ENCODE measurements at regions of chr10 and their contacts with region 1.

Region 1: GRCh38 chr10:124719213-124719851 is 24.8 kb downstream of the FAM53B start:
- DNase-seq: peak; percentile 54 to 85 (median 77)
- H3K4me3 ChIP-seq: peak overlapping the region; percentile 42
- H3K4me3 Mint-ChIP-seq: peak overlapping the region; percentile 35 to 85 (median 82)
- H3K27ac ChIP-seq: peak overlapping the region; percentile 77
- H3K27ac Mint-ChIP-seq: peak overlapping the region; percentile 88 to 99 (median 98)
- H3K4me1 ChIP-seq: peaks cover 99% of the 10 kb centered on the region
- H3K4me1 Mint-ChIP-seq: peaks cover 92 to 99% (median 97%) of the 10 kb centered on the region in 3 donors
- H3K27me3 ChIP-seq: no peaks in the 10 kb centered on the region
- H3K27me3 Mint-ChIP-seq: peaks cover 0 to 2% of the 10 kb centered on the region in 2 donors

Region 2: GRCh38 chr10:124539935-124540641 is 179.2 kb before region 1 on chr10:
- CTCF ChIA-PET with region 1: interaction called, 11 read pairs
- POLR2A ChIA-PET with region 1: no interaction called
- DNase-seq: peak; percentile 59 to 81 (median 63)
- H3K4me3 ChIP-seq: no peak overlapping the region
- H3K4me3 Mint-ChIP-seq: no peak overlapping the region
- H3K27ac ChIP-seq: no peak overlapping the region
- H3K27ac Mint-ChIP-seq: peak overlapping the region in 2 of 8 donors; percentile 3 to 57
- H3K4me1 ChIP-seq: peaks cover 11% of the 10 kb centered on the region
- H3K4me1 Mint-ChIP-seq: peaks cover under 1 to 13% (median 6%) of the 10 kb centered on the region in 3 donors
- H3K27me3 ChIP-seq: no peaks in the 10 kb centered on the region
- H3K27me3 Mint-ChIP-seq: no peaks in the 10 kb centered on the region

Region 3: DNA sequence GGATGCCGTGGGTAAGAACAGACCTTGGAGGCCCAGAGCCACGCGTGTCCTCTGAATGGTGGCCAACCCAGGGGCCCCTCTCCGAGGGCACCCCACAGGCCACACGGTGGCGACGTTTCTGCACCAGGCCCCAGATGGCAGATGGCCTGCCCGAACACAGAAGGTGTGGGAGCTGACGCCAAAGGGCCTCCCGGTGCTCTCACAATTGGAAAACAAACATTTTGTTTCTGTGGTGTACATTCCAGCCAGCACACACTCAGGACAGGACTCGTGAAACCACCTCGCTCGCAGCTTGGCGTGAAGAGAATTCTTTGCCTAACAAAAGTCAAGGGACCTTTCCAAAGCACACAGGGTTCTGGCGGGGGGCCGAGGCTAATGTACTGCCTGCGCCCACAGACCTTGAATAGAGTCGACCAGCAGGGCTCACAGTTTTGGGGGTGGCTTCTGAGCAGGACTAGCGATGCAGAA is 87.2 kb before region 1 on chr10:
- CTCF ChIA-PET with region 1: interaction called, 29 read pairs
- POLR2A ChIA-PET with region 1: interaction called, 7 read pairs
- DNase-seq: peak in 4 of 5 donors; percentile 26 to 64 (median 32)
- H3K4me3 ChIP-seq: no peak overlapping the region
- H3K4me3 Mint-ChIP-seq: peak overlapping the region in 1 of 7 donors; percentile 13
- H3K27ac ChIP-seq: no peak overlapping the region
- H3K27ac Mint-ChIP-seq: peak overlapping the region in 7 of 8 donors; percentile 50 to 94 (median 82)
- H3K4me1 ChIP-seq: peaks cover 64% of the 10 kb centered on the region
- H3K4me1 Mint-ChIP-seq: peaks cover 65 to 94% (median 81%) of the 10 kb centered on the region in 3 donors
- H3K27me3 ChIP-seq: no peaks in the 10 kb centered on the region
- H3K27me3 Mint-ChIP-seq: no peaks in the 10 kb centered on the region

Region 4: DNA sequence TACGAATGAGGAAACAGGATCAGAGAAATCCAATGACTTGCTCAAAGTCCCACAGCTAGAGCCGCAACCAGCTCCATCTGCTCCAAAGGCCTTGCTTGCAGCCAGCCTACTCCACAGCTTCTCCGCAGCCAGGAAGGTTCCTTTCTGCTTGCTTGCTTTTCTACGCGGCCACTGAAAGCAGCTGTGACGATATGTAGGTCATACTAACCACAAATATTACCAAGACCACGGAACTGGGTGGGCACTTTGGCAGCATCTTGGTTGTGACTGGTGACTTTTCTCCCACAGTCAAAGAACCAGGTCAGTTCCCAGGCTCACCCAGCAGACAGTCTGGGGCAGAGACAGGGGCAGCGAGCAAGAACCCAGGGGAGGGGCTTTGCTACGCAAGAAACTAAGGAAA is 61.5 kb before region 1 on chr10:
- CTCF ChIA-PET with region 1: interaction called, 32 read pairs
- POLR2A ChIA-PET with region 1: interaction called, 7 read pairs
- DNase-seq: peak in 4 of 5 donors; percentile 39 to 77 (median 65)
- H3K4me3 ChIP-seq: no peak overlapping the region
- H3K4me3 Mint-ChIP-seq: peak overlapping the region; percentile 41 to 90 (median 80)
- H3K27ac ChIP-seq: peak overlapping the region; percentile 79
- H3K27ac Mint-ChIP-seq: peak overlapping the region; percentile 91 to 99 (median 97)
- H3K4me1 ChIP-seq: peaks cover 89% of the 10 kb centered on the region
- H3K4me1 Mint-ChIP-seq: peaks cover 87 to 95% (median 88%) of the 10 kb centered on the region in 3 donors
- H3K27me3 ChIP-seq: no peaks in the 10 kb centered on the region
- H3K27me3 Mint-ChIP-seq: peaks cover 0 to 2% of the 10 kb centered on the region in 2 donors

Region 5: DNA sequence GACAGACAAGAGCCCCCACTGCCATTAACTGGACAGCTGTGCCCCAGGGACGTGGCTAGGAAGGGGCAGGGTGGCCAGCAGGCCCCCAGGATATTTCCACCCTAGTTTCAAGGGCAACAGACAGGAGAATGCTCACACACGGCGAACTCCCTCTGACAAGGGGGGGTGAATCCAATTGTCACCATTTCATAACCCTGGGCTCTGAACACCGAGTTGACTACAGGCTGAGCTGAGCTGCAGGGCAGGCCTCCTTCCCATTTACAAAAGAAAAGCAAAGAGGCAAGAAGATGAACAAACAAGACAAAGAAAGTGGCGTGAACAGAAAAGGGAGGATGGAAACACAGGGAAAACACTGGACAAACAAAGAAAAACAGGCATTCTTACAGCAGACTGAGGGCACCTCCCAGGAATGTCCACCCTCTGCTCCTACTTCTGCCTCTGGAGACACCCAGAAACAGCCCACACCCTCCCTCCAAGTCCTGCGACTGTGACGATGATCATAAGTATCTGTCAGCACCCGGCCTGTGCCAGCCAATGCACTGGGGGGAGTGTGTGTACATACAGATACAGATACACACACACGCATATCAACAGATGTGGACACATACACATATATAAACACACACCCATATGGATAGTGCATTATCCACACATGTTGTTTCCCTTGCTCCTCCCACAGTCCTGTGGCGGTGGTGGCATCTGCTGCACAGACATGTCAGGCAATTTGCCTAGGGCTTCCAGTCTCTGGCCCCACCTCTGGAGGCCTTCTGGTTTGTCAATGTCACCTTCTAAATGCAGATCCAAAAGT is 41.4 kb before region 1 on chr10:
- CTCF ChIA-PET with region 1: interaction called, 65 read pairs
- POLR2A ChIA-PET with region 1: interaction called, 30 read pairs
- DNase-seq: no peak
- H3K4me3 ChIP-seq: peak overlapping the region; percentile 11
- H3K4me3 Mint-ChIP-seq: peak overlapping the region; percentile 69 to 88 (median 82)
- H3K27ac ChIP-seq: no peak overlapping the region
- H3K27ac Mint-ChIP-seq: peak overlapping the region; percentile 72 to 96 (median 92)
- H3K4me1 ChIP-seq: peaks cover 96% of the 10 kb centered on the region
- H3K4me1 Mint-ChIP-seq: peaks cover 83 to 97% (median 92%) of the 10 kb centered on the region in 3 donors
- H3K27me3 ChIP-seq: no peaks in the 10 kb centered on the region
- H3K27me3 Mint-ChIP-seq: peaks cover 0 to 2% of the 10 kb centered on the region in 2 donors

Region 6: DNA sequence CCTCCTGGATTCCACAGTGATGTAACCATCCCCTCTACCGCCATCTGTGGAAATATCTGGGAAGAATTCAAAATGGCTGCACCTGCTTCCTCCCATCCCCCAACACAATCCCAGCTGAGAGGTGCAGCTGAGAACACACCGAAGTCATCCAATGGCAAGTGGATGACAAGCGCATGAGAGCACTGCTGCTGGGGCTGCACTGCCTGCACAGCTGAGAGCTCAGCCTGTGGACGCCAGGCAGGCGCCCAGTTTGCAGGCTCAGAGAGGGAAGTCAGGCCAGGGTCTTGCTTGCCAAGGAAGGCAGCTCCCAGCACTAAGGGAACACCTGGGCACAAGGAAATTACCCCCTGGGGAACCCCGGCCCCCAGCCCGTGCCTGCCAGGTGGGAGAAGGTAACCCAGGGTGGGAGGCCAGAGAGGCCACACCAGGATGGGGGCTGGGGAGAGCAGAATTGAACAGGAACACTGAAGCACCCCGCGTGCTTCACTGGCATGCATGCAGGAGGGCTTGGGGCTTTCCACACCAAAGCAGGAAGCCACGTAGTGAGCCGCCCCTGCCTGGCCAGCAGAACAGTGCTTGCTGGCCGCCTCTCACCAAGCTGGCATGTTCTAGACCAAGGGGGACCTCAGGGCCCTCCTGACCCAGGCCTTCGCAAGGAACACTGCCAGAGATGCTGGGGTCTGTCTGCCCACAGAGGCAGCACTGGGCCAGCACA is 21.3 kb before region 1 on chr10:
- CTCF ChIA-PET with region 1: interaction called, 312 read pairs
- POLR2A ChIA-PET with region 1: interaction called, 34 read pairs
- DNase-seq: peak in 4 of 5 donors; percentile 39 to 72 (median 42)
- H3K4me3 ChIP-seq: peak overlapping the region; percentile 36
- H3K4me3 Mint-ChIP-seq: peak overlapping the region in 6 of 7 donors; percentile 79 to 87 (median 82)
- H3K27ac ChIP-seq: peak overlapping the region; percentile 59
- H3K27ac Mint-ChIP-seq: peak overlapping the region; percentile 93 to 99 (median 98)
- H3K4me1 ChIP-seq: peaks cover 95% of the 10 kb centered on the region
- H3K4me1 Mint-ChIP-seq: peaks cover 95 to 100% (median 99%) of the 10 kb centered on the region in 3 donors
- H3K27me3 ChIP-seq: no peaks in the 10 kb centered on the region
- H3K27me3 Mint-ChIP-seq: no peaks in the 10 kb centered on the region

Region 7: GRCh38 chr10:124708922-124709520 is 10.3 kb before region 1 on chr10:
- CTCF ChIA-PET with region 1: interaction called, 312 read pairs
- POLR2A ChIA-PET with region 1: interaction called, 18 read pairs
- DNase-seq: peak in 1 of 5 donors; percentile 47
- H3K4me3 ChIP-seq: no peak overlapping the region
- H3K4me3 Mint-ChIP-seq: peak overlapping the region in 6 of 7 donors; percentile 47 to 84 (median 58)
- H3K27ac ChIP-seq: peak overlapping the region; percentile 21
- H3K27ac Mint-ChIP-seq: peak overlapping the region; percentile 80 to 96 (median 90)
- H3K4me1 ChIP-seq: peaks cover 89% of the 10 kb centered on the region
- H3K4me1 Mint-ChIP-seq: peaks cover 88 to 93% (median 92%) of the 10 kb centered on the region in 3 donors
- H3K27me3 ChIP-seq: no peaks in the 10 kb centered on the region
- H3K27me3 Mint-ChIP-seq: no peaks in the 10 kb centered on the region

Region 8: DNA sequence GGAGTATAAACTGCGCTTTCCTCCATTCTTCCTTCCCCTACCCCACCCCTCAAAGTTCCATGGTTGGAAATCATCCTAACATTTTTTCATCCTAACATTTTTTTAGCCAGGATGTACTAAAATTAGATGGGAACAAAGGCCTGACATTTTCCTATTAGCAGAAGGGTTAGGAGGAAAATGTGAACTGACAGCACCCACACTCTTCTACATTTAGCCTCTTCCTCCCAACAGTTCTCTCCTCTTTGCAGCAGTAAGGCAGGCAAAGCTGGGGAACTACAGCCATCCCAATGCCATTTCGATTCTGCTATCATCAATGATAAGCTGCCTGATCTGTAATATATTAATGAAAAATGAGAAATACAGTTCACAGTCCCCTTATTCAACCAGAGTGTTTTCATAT is 36.2 kb after region 1 on chr10:
- CTCF ChIA-PET with region 1: no interaction called
- POLR2A ChIA-PET with region 1: no interaction called
- DNase-seq: no peak
- H3K4me3 ChIP-seq: no peak overlapping the region
- H3K4me3 Mint-ChIP-seq: no peak overlapping the region
- H3K27ac ChIP-seq: no peak overlapping the region
- H3K27ac Mint-ChIP-seq: no peak overlapping the region
- H3K4me1 ChIP-seq: no peaks in the 10 kb centered on the region
- H3K4me1 Mint-ChIP-seq: peaks cover 0 to 4% (median 1%) of the 10 kb centered on the region in 3 donors
- H3K27me3 ChIP-seq: no peaks in the 10 kb centered on the region
- H3K27me3 Mint-ChIP-seq: no peaks in the 10 kb centered on the region